ENCODE measurements at regions of chr14 and their contacts with region 1.

Region 1: DNA sequence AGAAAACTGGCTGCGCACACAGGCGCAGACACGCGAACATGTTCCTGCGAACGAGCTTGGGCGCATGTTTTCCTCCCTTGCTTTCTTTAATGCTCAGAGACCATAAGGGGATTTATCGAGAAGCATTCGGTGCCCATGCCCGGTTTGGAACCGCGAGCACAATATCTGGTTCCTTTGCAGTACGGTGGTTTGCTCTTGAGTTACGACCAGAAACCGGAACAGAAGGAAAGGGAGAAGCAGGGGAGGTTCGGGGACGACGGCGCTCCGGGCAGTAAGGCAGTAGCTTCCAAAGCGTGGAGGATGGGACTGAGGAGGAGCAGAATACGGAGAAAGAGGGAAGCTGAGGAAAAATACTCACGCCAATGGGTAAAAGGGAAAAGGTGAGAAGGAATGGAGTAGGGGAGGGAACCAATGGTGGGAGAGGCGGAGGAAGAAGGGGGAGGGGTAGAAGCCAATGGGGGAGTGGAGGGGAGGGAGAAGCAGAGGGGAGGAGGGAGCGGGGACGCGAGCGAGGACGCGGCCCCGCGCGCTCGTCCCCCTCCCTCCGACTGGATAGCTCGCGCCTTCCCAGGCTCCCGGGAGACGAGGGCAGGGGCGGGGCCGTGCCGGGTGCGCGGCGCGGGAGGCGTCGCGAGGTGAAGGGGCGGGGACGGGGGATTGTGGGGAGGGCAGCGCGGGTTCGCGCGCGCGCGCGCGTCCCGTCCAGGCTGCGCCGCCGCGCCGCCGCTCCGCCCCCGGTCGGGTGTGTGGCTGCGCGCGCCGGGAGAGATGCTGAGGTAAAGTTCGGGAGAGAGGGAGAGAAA is 625 bp upstream of the ARHGAP5 start:
- DNase-seq: peak; percentile 79
- CTCF ChIP-seq: no peak

Region 2: DNA sequence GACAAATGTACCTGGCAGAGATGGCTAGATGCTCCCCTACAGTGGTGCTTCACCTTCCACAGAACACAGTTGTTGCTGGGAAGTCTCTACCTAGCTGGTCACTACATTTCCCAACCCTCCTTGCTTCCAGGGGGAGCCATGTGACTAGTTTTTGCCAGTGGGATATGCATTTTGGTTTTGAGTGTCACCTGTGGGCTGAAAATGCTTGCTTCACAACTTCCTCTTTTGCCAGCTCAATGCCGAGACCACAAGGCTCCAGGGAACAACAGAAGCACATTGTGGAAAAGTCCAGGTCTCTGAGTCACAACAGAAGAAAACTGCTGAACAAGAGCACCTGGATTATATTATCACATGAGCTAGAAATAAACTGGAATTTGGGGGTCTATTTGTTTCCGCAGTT is 47.9 kb before region 1 on chr14:
- CTCF ChIA-PET with region 1: no interaction called
- POLR2A ChIA-PET with region 1: no interaction called
- DNase-seq: no peak
- CTCF ChIP-seq: no peak

Region 3: GRCh38 chr14:32244404-32244803 is 167.9 kb after region 1 on chr14:
- CTCF ChIA-PET with region 1: interaction called, 13 read pairs
- POLR2A ChIA-PET with region 1: no interaction called
- DNase-seq: no peak
- CTCF ChIP-seq: peak; percentile 28

Region 4: DNA sequence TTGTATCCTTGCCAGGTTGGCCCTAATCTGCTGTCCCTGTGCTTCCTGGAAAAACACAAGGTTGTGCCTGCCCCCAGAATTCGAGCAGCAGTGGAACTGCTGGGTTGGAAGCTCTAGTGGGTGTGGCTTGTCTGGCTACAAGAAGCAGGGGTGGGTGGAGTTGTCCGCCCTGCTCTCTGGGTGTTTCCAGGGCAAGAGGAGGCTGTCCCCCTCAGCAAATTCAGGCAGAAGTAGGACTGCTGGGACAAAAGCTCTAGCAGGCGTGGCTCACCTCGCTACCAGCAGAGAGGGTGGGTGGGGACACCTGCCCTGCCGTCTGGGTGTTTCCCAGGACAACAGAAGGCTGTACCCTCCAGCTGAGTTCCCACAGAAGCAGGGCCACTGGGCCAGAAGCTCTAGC is 789.4 kb after region 1 on chr14:
- CTCF ChIA-PET with region 1: no interaction called
- POLR2A ChIA-PET with region 1: no interaction called
- DNase-seq: no peak
- CTCF ChIP-seq: no peak